CD8-positive, alpha-beta T cell (primary cell): ENCODE measurements at regions of chr5 and their contacts with region 1.

Region 1: GRCh38 chr5:24510523-24510988 is 134.2 kb downstream of the CDH10 start:
- DNase-seq: no peak
- ATAC-seq: no peak
- H3K4me3 ChIP-seq: no peak overlapping the region
- H3K4me3 Mint-ChIP-seq: no peak overlapping the region
- H3K27ac ChIP-seq: no peak overlapping the region
- H3K27ac Mint-ChIP-seq: no peak overlapping the region
- H3K4me1 ChIP-seq: no peaks in the 10 kb centered on the region
- H3K4me1 Mint-ChIP-seq: no peaks in the 10 kb centered on the region
- H3K27me3 ChIP-seq: no peaks in the 10 kb centered on the region
- H3K27me3 Mint-ChIP-seq: no peaks in the 10 kb centered on the region
- CTCF ChIP-seq: no peak

Region 2: GRCh38 chr5:23864786-23865185 is 645.8 kb before region 1 on chr5:
- CTCF ChIA-PET with region 1: no interaction called
- POLR2A ChIA-PET with region 1: no interaction called
- intact Hi-C with region 1: loop called in 1 of 2 experiments (anchors 5 kb)
- DNase-seq: no peak
- ATAC-seq: no peak
- H3K4me3 ChIP-seq: no peak overlapping the region
- H3K4me3 Mint-ChIP-seq: no peak overlapping the region
- H3K27ac ChIP-seq: no peak overlapping the region
- H3K27ac Mint-ChIP-seq: no peak overlapping the region
- H3K4me1 ChIP-seq: no peaks in the 10 kb centered on the region
- H3K4me1 Mint-ChIP-seq: no peaks in the 10 kb centered on the region
- H3K27me3 ChIP-seq: no peaks in the 10 kb centered on the region
- H3K27me3 Mint-ChIP-seq: no peaks in the 10 kb centered on the region
- CTCF ChIP-seq: no peak

Region 3: DNA sequence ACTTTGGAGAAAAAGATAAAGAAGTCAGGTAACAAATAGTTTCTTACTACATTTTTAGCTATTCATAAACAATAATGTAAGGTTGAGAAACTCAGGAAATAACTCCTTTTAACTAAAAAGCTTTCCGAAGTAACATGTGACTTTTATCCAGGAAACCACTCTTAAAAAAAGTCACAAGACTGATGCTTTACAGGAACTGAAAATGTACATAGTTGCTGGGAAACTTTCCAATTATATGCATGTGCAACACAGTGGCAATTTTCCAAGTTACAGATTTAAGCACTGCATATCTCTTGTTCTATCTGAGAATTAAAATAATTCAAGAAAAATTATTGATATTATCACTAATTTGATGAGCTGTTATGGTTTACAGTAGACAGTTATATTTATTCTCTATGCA is 29.1 kb after region 1 on chr5:
- CTCF ChIA-PET with region 1: no interaction called
- POLR2A ChIA-PET with region 1: no interaction called
- intact Hi-C with region 1: no loop called
- DNase-seq: no peak
- ATAC-seq: no peak
- H3K4me3 ChIP-seq: no peak overlapping the region
- H3K4me3 Mint-ChIP-seq: no peak overlapping the region
- H3K27ac ChIP-seq: no peak overlapping the region
- H3K27ac Mint-ChIP-seq: no peak overlapping the region
- H3K4me1 ChIP-seq: no peaks in the 10 kb centered on the region
- H3K4me1 Mint-ChIP-seq: no peaks in the 10 kb centered on the region
- H3K27me3 ChIP-seq: no peaks in the 10 kb centered on the region
- H3K27me3 Mint-ChIP-seq: no peaks in the 10 kb centered on the region
- CTCF ChIP-seq: no peak